CD8-positive, alpha-beta T cell (primary cell): ENCODE measurements at regions of chr10 and their contacts with region 1.

Region 1: DNA sequence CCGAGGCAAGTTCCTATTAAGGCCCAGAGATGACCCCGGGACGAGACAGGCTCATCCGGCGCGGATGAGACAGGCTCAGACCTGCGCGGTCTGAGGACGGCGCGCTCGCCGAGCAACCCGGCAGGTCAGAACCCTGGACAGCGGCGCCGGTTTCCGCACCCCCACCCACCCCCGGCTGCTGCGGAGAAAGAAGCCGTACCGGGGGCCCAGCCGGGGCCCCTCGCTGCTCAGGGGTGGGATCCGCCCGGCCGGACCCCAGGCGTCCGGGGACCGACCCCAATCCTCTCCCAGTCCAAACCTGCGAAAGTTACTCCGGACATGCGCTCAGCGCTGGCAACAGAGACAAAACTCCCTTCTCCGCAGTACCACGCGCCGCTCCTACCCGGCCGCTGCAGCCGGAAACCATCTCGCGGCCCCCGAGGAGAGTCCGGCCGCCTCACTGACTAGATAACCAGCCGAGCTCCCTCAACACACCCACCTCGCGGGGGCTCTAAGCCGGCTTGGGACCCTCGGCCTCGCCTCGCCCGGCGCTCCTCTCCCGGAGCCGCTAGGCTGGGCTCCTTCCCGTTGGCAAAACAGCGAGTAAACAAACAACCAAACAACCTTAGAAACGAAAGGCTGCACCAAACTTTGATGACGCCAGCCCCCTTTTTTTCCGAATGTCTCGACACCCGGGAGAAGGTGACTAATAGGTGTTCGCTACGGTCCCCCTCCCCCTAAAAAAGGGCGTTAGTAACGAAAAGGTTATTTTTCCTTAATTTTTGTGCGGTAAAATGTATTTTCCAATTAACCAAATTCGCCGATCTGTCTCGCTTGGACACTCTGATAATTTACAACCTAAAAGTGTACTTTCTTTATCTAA is 2.3 kb upstream of the DRGX start:
- DNase-seq: peak in 8 of 9 experiments; percentile 30 to 69 (median 56)
- ATAC-seq: peak; percentile 84
- H3K4me3 ChIP-seq: peak overlapping the region in 1 of 2 experiments; percentile 21
- H3K4me3 Mint-ChIP-seq: no peak overlapping the region
- H3K27ac ChIP-seq: no peak overlapping the region
- H3K27ac Mint-ChIP-seq: no peak overlapping the region
- H3K4me1 ChIP-seq: no peaks in the 10 kb centered on the region
- H3K4me1 Mint-ChIP-seq: peaks cover 16% of the 10 kb centered on the region
- H3K27me3 ChIP-seq: peaks cover 39 to 42% of the 10 kb centered on the region in 2 experiments
- H3K27me3 Mint-ChIP-seq: peaks cover 64% of the 10 kb centered on the region
- CTCF ChIP-seq: no peak

Region 2: DNA sequence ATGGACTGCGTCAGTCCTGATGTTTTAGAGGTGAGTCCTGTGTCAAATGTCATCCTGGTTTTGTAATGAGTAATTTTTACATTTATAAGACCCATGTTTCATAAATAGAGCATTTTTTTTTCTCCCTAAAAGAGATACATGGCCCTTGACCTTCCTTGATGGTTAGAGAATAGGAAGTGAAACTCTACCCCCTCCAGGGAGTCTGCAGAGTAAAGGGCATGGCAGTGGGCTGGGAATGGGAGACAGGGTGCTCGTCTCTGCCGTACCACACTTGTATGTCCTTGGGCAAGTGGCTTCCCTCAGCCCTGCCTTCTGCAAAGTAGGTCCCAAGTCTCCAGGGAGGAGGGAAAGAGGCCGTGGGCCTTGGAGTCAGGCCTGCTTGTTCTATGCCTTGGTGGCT is 649.7 kb before region 1 on chr10:
- CTCF ChIA-PET with region 1: no interaction called
- POLR2A ChIA-PET with region 1: no interaction called
- intact Hi-C with region 1: no loop called
- DNase-seq: no peak
- ATAC-seq: no peak
- H3K4me3 ChIP-seq: no peak overlapping the region
- H3K4me3 Mint-ChIP-seq: no peak overlapping the region
- H3K27ac ChIP-seq: no peak overlapping the region
- H3K27ac Mint-ChIP-seq: no peak overlapping the region
- H3K4me1 ChIP-seq: no peaks in the 10 kb centered on the region
- H3K4me1 Mint-ChIP-seq: no peaks in the 10 kb centered on the region
- H3K27me3 ChIP-seq: no peaks in the 10 kb centered on the region
- H3K27me3 Mint-ChIP-seq: peaks cover 2% of the 10 kb centered on the region
- CTCF ChIP-seq: no peak

Region 3: GRCh38 chr10:49606981-49607535 is 208.8 kb after region 1 on chr10:
- CTCF ChIA-PET with region 1: no interaction called
- POLR2A ChIA-PET with region 1: no interaction called
- intact Hi-C with region 1: loop called in 1 of 2 experiments (anchors 5 kb)
- DNase-seq: peak; percentile 30 to 76 (median 60)
- ATAC-seq: peak; percentile 72
- H3K4me3 ChIP-seq: no peak overlapping the region
- H3K4me3 Mint-ChIP-seq: no peak overlapping the region
- H3K27ac ChIP-seq: no peak overlapping the region
- H3K27ac Mint-ChIP-seq: no peak overlapping the region
- H3K4me1 ChIP-seq: no peaks in the 10 kb centered on the region
- H3K4me1 Mint-ChIP-seq: no peaks in the 10 kb centered on the region
- H3K27me3 ChIP-seq: peaks cover 0 to 10% of the 10 kb centered on the region in 2 experiments
- H3K27me3 Mint-ChIP-seq: peaks cover 54% of the 10 kb centered on the region
- CTCF ChIP-seq: no peak